ENCODE measurements at regions of chr3 and their contacts with region 1.

Region 1: GRCh38 chr3:1082108-1082507 is 10.7 kb upstream of the CNTN6 start:
- DNase-seq: peak; percentile 71
- H3K4me3 Mint-ChIP-seq: no peak overlapping the region
- H3K27ac Mint-ChIP-seq: no peak overlapping the region
- H3K4me1 Mint-ChIP-seq: peaks cover 7% of the 10 kb centered on the region
- H3K27me3 Mint-ChIP-seq: no peaks in the 10 kb centered on the region
- CTCF ChIP-seq: peak; percentile 40

Region 2: DNA sequence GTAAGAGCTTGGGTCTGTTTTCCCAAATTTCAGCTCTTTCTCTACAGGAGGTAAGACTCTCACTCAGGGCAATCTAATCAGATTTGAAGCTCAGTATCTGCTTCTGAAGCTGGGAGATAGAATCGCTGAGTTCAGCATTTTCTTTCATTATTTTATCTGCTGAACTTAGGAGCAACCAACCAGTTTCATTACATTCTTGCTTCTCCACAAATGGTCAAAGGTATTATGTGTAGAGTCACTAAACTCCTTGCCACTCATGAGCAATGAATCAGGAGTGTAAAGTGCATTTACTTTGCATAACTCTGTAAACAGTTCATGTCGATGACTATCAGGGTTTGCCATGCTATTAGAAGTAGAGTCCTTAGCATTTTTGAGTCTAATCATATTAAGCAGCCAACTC is 636.1 kb before region 1 on chr3:
- CTCF ChIA-PET with region 1: no interaction called
- intact Hi-C with region 1: no loop called
- DNase-seq: no peak
- H3K4me3 Mint-ChIP-seq: no peak overlapping the region
- H3K27ac Mint-ChIP-seq: no peak overlapping the region
- H3K4me1 Mint-ChIP-seq: peaks cover 9% of the 10 kb centered on the region
- H3K27me3 Mint-ChIP-seq: no peaks in the 10 kb centered on the region
- CTCF ChIP-seq: no peak

Region 3: GRCh38 chr3:908839-909238 is 173.3 kb before region 1 on chr3:
- CTCF ChIA-PET with region 1: no interaction called
- intact Hi-C with region 1: loop called (anchors 5 kb)
- DNase-seq: no peak
- H3K4me3 Mint-ChIP-seq: no peak overlapping the region
- H3K27ac Mint-ChIP-seq: no peak overlapping the region
- H3K4me1 Mint-ChIP-seq: peaks cover 9% of the 10 kb centered on the region
- H3K27me3 Mint-ChIP-seq: no peaks in the 10 kb centered on the region
- CTCF ChIP-seq: no peak

Region 4: GRCh38 chr3:1068985-1069384 is 13.1 kb before region 1 on chr3:
- CTCF ChIA-PET with region 1: no interaction called
- intact Hi-C with region 1: no loop called
- DNase-seq: no peak
- H3K4me3 Mint-ChIP-seq: no peak overlapping the region
- H3K27ac Mint-ChIP-seq: no peak overlapping the region
- H3K4me1 Mint-ChIP-seq: no peaks in the 10 kb centered on the region
- H3K27me3 Mint-ChIP-seq: no peaks in the 10 kb centered on the region
- CTCF ChIP-seq: no peak

Region 5: GRCh38 chr3:1251282-1252060 is 169.4 kb after region 1 on chr3:
- CTCF ChIA-PET with region 1: no interaction called
- intact Hi-C with region 1: loop called (anchors 1 kb)
- DNase-seq: no peak
- H3K4me3 Mint-ChIP-seq: no peak overlapping the region
- H3K27ac Mint-ChIP-seq: no peak overlapping the region
- H3K4me1 Mint-ChIP-seq: peaks cover 10% of the 10 kb centered on the region
- H3K27me3 Mint-ChIP-seq: no peaks in the 10 kb centered on the region
- CTCF ChIP-seq: no peak

Region 6: GRCh38 chr3:1330107-1330506 is 248.0 kb after region 1 on chr3:
- CTCF ChIA-PET with region 1: no interaction called
- intact Hi-C with region 1: no loop called
- DNase-seq: no peak
- H3K4me3 Mint-ChIP-seq: no peak overlapping the region
- H3K27ac Mint-ChIP-seq: no peak overlapping the region
- H3K4me1 Mint-ChIP-seq: no peaks in the 10 kb centered on the region
- H3K27me3 Mint-ChIP-seq: no peaks in the 10 kb centered on the region
- CTCF ChIP-seq: no peak

Region 7: DNA sequence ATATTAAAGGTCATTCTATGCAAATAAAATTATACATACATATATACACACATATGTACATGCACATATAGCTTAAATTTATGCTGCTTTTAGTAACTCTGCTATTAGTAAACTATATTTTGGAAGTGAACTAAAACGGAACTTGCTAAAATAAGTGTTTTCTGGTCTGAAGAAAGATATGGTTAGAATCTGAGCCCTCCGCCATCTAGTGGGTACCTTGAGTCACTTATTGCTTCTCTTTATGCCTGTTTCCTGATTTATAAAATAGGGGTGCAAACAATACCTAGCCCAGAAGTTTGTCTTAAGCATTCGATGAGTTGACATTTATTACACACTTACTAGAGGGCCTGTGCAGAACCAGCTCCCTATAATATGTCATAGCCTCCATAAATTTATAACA is 266.4 kb after region 1 on chr3:
- CTCF ChIA-PET with region 1: no interaction called
- intact Hi-C with region 1: loop called (anchors 10 kb)
- DNase-seq: no peak
- H3K4me3 Mint-ChIP-seq: no peak overlapping the region
- H3K27ac Mint-ChIP-seq: no peak overlapping the region
- H3K4me1 Mint-ChIP-seq: no peaks in the 10 kb centered on the region
- H3K27me3 Mint-ChIP-seq: no peaks in the 10 kb centered on the region
- CTCF ChIP-seq: no peak

Region 8: GRCh38 chr3:1987980-1988379 is 905.9 kb after region 1 on chr3:
- CTCF ChIA-PET with region 1: no interaction called
- intact Hi-C with region 1: loop called (anchors 10 kb)
- DNase-seq: peak; percentile 0
- H3K4me3 Mint-ChIP-seq: no peak overlapping the region
- H3K27ac Mint-ChIP-seq: no peak overlapping the region
- H3K4me1 Mint-ChIP-seq: no peaks in the 10 kb centered on the region
- H3K27me3 Mint-ChIP-seq: no peaks in the 10 kb centered on the region
- CTCF ChIP-seq: no peak

Measured in Calu3 (cell line).